Activated T-helper 1 cell treated with anti-CD3 and anti-CD28 coated beads, Interleukin-12 subunit alpha, Interleukin-12 subunit beta, Interleukin-2, Interleukin-4 antibody, amounts not matched to agents 30 ng/mL and 10 ng/mL and 1 ng/mL, durations not matched to agents 14 hours and 24 hours and 36 hours (primary cell): ENCODE measurements at regions of chr4 and their contacts with region 1.

Region 1: DNA sequence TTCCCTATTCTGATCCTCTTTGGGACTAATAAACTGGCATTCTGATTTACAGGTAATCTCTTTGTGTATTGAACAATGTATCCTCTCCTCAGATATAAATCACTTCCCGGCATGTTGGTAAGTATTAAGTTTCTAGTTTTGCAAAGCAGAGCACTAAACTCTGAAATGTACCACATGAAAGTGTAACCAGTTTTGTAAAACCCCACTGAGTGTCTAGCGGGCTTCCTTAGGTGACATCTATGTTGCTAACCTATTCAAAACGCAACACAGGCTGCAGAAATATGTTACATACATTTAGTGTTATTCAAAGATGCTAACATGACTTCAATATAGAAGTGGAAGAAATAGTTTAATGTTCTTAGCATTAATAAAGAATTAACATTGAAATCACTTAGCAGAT is 25.2 kb downstream of the DNAJB14 start:
- DNase-seq: peak; percentile 9
- H3K4me3 Mint-ChIP-seq: peak overlapping the region; percentile 1
- H3K27ac Mint-ChIP-seq: no peak overlapping the region
- H3K4me1 Mint-ChIP-seq: peaks cover 16% of the 10 kb centered on the region
- H3K27me3 Mint-ChIP-seq: no peaks in the 10 kb centered on the region

Region 2: GRCh38 chr4:99894161-99894997 is 26.8 kb before region 1 on chr4 and contains the start of gene LAMTOR3:
- intact Hi-C with region 1: loop called (anchors 2 kb)
- DNase-seq: peak; percentile 87
- H3K4me3 Mint-ChIP-seq: peak within 1 kb of the TSS; percentile 97
- H3K27ac Mint-ChIP-seq: peak within 1 kb of the TSS; percentile 95
- H3K4me1 Mint-ChIP-seq: peaks cover 42% of the 10 kb centered on the region
- H3K27me3 Mint-ChIP-seq: no peaks in the 10 kb centered on the region
- total RNA-seq, gene LAMTOR3: 28.6 and 29.7 TPM in 2 replicates

Region 3: GRCh38 chr4:100268789-100269188 is 347.6 kb after region 1 on chr4:
- intact Hi-C with region 1: no loop called
- DNase-seq: no peak
- H3K4me3 Mint-ChIP-seq: no peak overlapping the region
- H3K27ac Mint-ChIP-seq: no peak overlapping the region
- H3K4me1 Mint-ChIP-seq: no peaks in the 10 kb centered on the region
- H3K27me3 Mint-ChIP-seq: peaks cover 3% of the 10 kb centered on the region

Region 4: GRCh38 chr4:101292901-101293300 is 1371.7 kb after region 1 on chr4:
- intact Hi-C with region 1: no loop called
- DNase-seq: no peak
- H3K4me3 Mint-ChIP-seq: no peak overlapping the region
- H3K27ac Mint-ChIP-seq: no peak overlapping the region
- H3K4me1 Mint-ChIP-seq: no peaks in the 10 kb centered on the region
- H3K27me3 Mint-ChIP-seq: peaks cover 8% of the 10 kb centered on the region